Panc1 (cell line): ENCODE measurements at regions of chr3 and their contacts with region 1.

Region 1: GRCh38 chr3:12588039-12589009 is 31.4 kb downstream of the MKRN2 start:
- DNase-seq: no peak
- ATAC-seq: no peak
- H3K4me3 ChIP-seq: no peak overlapping the region
- H3K27ac ChIP-seq: no peak overlapping the region
- H3K4me1 ChIP-seq: no peaks in the 10 kb centered on the region
- H3K27me3 ChIP-seq: no peaks in the 10 kb centered on the region
- CTCF ChIP-seq: no peak

Region 2: GRCh38 chr3:12633108-12633507 is 44.8 kb after region 1 on chr3:
- CTCF ChIA-PET with region 1: no interaction called
- POLR2A ChIA-PET with region 1: interaction called, 11 read pairs
- in situ Hi-C with region 1: no loop called
- intact Hi-C with region 1: no loop called
- DNase-seq: no peak
- ATAC-seq: no peak
- H3K4me3 ChIP-seq: no peak overlapping the region
- H3K27ac ChIP-seq: no peak overlapping the region
- H3K4me1 ChIP-seq: peaks cover 22% of the 10 kb centered on the region
- H3K27me3 ChIP-seq: no peaks in the 10 kb centered on the region
- CTCF ChIP-seq: no peak